CD8-positive, alpha-beta T cell (primary cell): ENCODE measurements at regions of chr12 and their contacts with region 1.

Region 1: GRCh38 chr12:7806863-7807487 is 17.8 kb downstream of the NANOG start:
- DNase-seq: peak; percentile 31 to 71 (median 61)
- ATAC-seq: peak; percentile 63
- H3K4me3 ChIP-seq: no peak overlapping the region
- H3K4me3 Mint-ChIP-seq: no peak overlapping the region
- H3K27ac ChIP-seq: no peak overlapping the region
- H3K27ac Mint-ChIP-seq: no peak overlapping the region
- H3K4me1 ChIP-seq: no peaks in the 10 kb centered on the region
- H3K4me1 Mint-ChIP-seq: no peaks in the 10 kb centered on the region
- H3K27me3 ChIP-seq: no peaks in the 10 kb centered on the region
- H3K27me3 Mint-ChIP-seq: peaks cover 2% of the 10 kb centered on the region
- CTCF ChIP-seq: peak; percentile 86

Region 2: GRCh38 chr12:7219599-7220243 is 587.3 kb before region 1 on chr12:
- CTCF ChIA-PET with region 1: interaction called, 4 read pairs
- POLR2A ChIA-PET with region 1: no interaction called
- intact Hi-C with region 1: loop called (anchors 1 kb)
- DNase-seq: peak; percentile 47 to 82 (median 76)
- ATAC-seq: peak; percentile 70
- H3K4me3 ChIP-seq: no peak overlapping the region
- H3K4me3 Mint-ChIP-seq: no peak overlapping the region
- H3K27ac ChIP-seq: no peak overlapping the region
- H3K27ac Mint-ChIP-seq: no peak overlapping the region
- H3K4me1 ChIP-seq: no peaks in the 10 kb centered on the region
- H3K4me1 Mint-ChIP-seq: no peaks in the 10 kb centered on the region
- H3K27me3 ChIP-seq: no peaks in the 10 kb centered on the region
- H3K27me3 Mint-ChIP-seq: no peaks in the 10 kb centered on the region
- CTCF ChIP-seq: peak; percentile 84

Region 3: DNA sequence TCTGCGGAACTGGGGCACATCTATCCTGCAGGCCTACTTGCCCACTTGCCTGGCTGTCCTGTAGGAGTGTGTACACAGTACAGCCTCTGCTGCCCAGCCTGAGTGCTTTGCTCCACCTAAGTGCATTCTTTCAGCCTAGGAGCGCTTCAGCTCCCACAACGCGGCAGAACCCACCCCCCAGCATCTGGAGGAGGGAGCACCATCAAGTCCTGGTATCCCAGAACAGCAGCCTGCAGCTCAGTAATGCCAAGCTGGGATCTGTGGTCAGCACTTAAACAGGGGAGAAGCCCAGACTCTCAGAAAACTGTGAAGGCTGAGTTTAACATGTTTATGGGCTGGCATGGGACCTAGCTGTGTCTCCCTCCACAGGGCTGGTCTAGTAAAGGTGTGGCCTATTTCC is 223.4 kb before region 1 on chr12:
- CTCF ChIA-PET with region 1: no interaction called
- POLR2A ChIA-PET with region 1: no interaction called
- intact Hi-C with region 1: loop called in 1 of 2 experiments (anchors 2 kb)
- DNase-seq: no peak
- ATAC-seq: no peak
- H3K4me3 ChIP-seq: no peak overlapping the region
- H3K4me3 Mint-ChIP-seq: no peak overlapping the region
- H3K27ac ChIP-seq: no peak overlapping the region
- H3K27ac Mint-ChIP-seq: no peak overlapping the region
- H3K4me1 ChIP-seq: no peaks in the 10 kb centered on the region
- H3K4me1 Mint-ChIP-seq: no peaks in the 10 kb centered on the region
- H3K27me3 ChIP-seq: peaks cover 0 to 3% of the 10 kb centered on the region in 2 experiments
- H3K27me3 Mint-ChIP-seq: peaks cover 17% of the 10 kb centered on the region
- CTCF ChIP-seq: no peak

Region 4: GRCh38 chr12:7678738-7679137 is 128.2 kb before region 1 on chr12:
- CTCF ChIA-PET with region 1: interaction called, 22 read pairs
- POLR2A ChIA-PET with region 1: no interaction called
- intact Hi-C with region 1: loop called in 1 of 2 experiments (anchors 1 kb)
- DNase-seq: no peak
- ATAC-seq: no peak
- H3K4me3 ChIP-seq: no peak overlapping the region
- H3K4me3 Mint-ChIP-seq: no peak overlapping the region
- H3K27ac ChIP-seq: no peak overlapping the region
- H3K27ac Mint-ChIP-seq: no peak overlapping the region
- H3K4me1 ChIP-seq: no peaks in the 10 kb centered on the region
- H3K4me1 Mint-ChIP-seq: peaks cover 8% of the 10 kb centered on the region
- H3K27me3 ChIP-seq: peaks cover 0 to 3% of the 10 kb centered on the region in 2 experiments
- H3K27me3 Mint-ChIP-seq: peaks cover 5% of the 10 kb centered on the region
- CTCF ChIP-seq: no peak

Region 5: GRCh38 chr12:7716381-7716780 is 90.6 kb before region 1 on chr12:
- CTCF ChIA-PET with region 1: no interaction called
- POLR2A ChIA-PET with region 1: no interaction called
- intact Hi-C with region 1: loop called in 1 of 2 experiments (anchors 5 kb)
- DNase-seq: peak in 2 of 9 experiments; percentile 20 to 36
- ATAC-seq: no peak
- H3K4me3 ChIP-seq: no peak overlapping the region
- H3K4me3 Mint-ChIP-seq: no peak overlapping the region
- H3K27ac ChIP-seq: no peak overlapping the region
- H3K27ac Mint-ChIP-seq: no peak overlapping the region
- H3K4me1 ChIP-seq: no peaks in the 10 kb centered on the region
- H3K4me1 Mint-ChIP-seq: no peaks in the 10 kb centered on the region
- H3K27me3 ChIP-seq: no peaks in the 10 kb centered on the region
- H3K27me3 Mint-ChIP-seq: peaks cover 7% of the 10 kb centered on the region
- CTCF ChIP-seq: no peak